Activated naive CD4-positive, alpha-beta T cell treated with anti-CD3 and anti-CD28 coated beads for 36 hours (primary cell): ENCODE measurements at regions of chr5 and their contacts with region 1.

Region 1: DNA sequence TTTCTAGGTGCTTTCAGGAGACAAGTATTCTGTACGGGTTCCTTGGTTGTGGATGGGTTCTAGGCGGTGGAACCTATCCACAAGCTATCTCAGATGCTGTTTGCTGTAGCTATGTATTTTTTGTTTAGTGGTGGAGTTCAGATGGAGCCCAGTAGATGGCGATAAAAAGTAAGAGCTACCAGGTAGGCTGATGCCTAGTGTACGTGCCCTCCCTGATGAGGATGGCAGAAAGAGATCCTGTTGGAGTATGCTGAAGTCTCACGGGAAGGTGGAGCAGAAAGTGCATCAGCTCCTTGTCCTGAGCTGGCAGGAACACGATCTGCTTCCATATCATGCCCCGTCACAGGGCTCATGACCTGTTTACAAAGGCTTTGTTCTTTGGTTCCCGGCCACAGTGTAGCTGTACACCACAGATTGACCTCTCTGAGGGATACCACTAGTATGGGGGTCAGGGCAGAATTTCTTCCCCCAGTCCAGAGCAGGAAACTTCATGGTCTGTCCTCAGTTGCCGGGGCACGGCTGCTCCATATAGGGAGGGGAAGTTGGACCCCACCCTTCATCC is 12.6 kb upstream of the UGT3A2 start:
- DNase-seq: peak; percentile 47
- H3K4me3 Mint-ChIP-seq: no peak overlapping the region
- H3K27ac Mint-ChIP-seq: no peak overlapping the region
- H3K4me1 Mint-ChIP-seq: no peaks in the 10 kb centered on the region
- H3K27me3 Mint-ChIP-seq: peaks cover 11% of the 10 kb centered on the region

Region 2: DNA sequence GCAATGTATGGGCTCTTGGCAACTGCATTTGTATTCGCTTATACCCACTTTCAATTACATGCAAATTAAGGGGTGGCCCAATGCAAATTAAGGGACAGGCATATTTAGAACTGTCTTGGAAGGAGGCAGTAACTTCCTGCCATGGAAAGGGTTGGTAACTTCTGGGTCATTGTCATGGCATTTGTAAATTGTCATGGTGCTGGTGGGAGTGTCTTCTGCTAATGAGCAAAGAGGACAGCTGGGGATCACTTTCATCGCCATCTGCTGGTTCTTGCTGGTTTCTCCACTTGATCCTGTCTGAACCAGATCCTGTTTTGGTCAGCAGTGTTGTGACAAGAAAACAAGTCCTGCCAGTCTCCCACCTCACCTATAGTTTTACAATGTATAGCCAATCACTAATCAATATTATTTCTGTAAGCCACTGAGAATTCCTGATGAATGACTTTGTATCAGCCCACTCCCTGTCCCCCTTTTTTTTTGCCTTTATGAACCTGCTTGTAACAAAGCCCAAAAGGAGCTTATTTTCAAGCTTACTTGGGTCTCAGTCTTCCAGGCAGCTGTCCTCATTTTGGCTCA is 10.8 kb after region 1 on chr5:
- CTCF ChIA-PET with region 1: interaction called, 18 read pairs
- intact Hi-C with region 1: no loop called
- DNase-seq: peak; percentile 16
- H3K4me3 Mint-ChIP-seq: no peak overlapping the region
- H3K27ac Mint-ChIP-seq: no peak overlapping the region
- H3K4me1 Mint-ChIP-seq: no peaks in the 10 kb centered on the region
- H3K27me3 Mint-ChIP-seq: peaks cover 6% of the 10 kb centered on the region

Region 3: DNA sequence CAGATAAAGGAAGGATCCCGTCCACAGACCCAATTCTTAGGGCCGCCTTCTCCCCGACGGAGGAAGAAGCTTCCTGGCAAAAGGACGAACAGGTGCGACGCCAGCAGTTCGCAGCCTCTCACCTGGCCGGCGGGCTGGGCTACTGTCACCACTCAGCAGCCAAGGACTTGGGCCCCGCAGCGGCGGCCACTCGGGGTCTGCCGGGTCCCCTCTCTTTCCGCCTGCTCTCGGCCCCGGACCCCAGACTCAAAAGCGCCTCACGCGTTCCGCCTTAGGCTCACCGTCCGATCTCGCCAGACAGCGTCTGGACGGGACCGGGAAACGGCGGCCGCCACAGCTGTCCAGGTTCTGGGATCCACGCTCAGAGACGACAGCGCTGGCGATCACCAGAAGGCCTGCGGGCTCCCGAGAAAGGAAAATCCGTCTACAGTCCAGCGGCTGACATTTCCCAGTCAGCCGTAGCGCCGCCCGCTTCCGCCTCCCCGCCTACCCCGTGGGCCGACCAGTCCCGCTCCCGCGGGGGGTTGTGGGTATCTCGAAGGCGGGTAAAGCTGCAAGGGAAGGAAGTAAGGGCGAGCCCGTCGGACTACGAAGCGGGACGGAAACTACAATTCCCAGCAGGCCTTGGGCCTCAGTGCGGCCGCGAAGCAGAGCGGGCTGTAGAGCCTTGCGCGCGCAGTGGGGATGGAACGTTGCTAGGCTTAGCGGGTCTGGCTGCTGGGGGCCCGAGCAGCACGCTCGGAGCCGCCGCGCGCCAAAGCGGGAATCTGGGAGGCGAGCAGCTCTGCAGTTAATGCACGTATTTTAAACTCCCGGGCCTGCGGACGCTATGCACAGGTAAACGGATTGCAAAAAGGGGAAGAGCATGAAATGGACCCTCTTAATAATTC is 72.4 kb after region 1 on chr5 and contains the starts of genes LMBRD2 and SKP2:
- CTCF ChIA-PET with region 1: interaction called, 8 read pairs
- intact Hi-C with region 1: loop called (anchors 1 kb)
- DNase-seq: peak; percentile 98
- H3K4me3 Mint-ChIP-seq: peak within 1 kb of the TSS; percentile 96
- H3K27ac Mint-ChIP-seq: peak within 1 kb of the TSS; percentile 76
- H3K4me1 Mint-ChIP-seq: peaks cover 67% of the 10 kb centered on the region
- H3K27me3 Mint-ChIP-seq: no peaks in the 10 kb centered on the region
- total RNA-seq, gene LMBRD2: 7.6 to 8.0 TPM
- total RNA-seq, gene SKP2: 44.4 to 48.1 TPM

Region 4: DNA sequence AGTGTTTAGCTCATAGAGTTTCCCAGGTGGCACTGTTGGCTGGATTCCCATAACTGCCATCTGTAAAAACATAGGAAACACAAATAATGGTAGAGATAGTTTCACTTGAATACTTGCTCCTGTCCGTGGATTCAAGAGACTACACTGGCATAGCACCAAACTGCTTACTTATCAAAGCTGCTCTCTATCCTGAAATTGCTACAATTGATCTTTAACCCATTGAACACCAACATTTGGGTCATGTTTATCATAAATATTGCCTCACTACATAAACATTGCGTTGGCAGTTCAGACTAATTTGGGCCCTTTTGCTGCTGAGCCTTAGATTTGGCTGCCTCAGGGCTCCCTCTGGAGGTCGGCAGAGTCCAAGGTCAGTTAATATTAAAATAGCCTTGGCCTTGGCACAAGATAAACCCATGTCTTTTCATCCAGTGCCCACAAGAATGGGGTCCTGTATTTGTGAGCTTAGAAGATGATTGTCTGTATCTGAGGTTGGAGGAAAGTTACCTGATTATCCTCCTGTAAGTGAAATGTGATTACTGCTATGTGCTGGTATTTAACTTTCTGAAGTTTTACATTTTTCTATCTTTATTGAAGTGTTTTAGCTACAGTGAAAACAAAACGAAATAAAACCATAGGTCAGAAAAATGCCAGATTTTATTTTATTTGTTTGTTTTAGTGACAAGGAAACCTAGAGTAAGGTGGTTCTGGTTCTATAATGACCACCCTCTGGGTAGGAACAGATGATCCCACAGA is 226.5 kb after region 1 on chr5:
- CTCF ChIA-PET with region 1: interaction called, 8 read pairs
- intact Hi-C with region 1: loop called (anchors 1 kb)
- DNase-seq: peak; percentile 51
- H3K4me3 Mint-ChIP-seq: no peak overlapping the region
- H3K27ac Mint-ChIP-seq: no peak overlapping the region
- H3K4me1 Mint-ChIP-seq: peaks cover 13% of the 10 kb centered on the region
- H3K27me3 Mint-ChIP-seq: peaks cover 2% of the 10 kb centered on the region

Region 5: DNA sequence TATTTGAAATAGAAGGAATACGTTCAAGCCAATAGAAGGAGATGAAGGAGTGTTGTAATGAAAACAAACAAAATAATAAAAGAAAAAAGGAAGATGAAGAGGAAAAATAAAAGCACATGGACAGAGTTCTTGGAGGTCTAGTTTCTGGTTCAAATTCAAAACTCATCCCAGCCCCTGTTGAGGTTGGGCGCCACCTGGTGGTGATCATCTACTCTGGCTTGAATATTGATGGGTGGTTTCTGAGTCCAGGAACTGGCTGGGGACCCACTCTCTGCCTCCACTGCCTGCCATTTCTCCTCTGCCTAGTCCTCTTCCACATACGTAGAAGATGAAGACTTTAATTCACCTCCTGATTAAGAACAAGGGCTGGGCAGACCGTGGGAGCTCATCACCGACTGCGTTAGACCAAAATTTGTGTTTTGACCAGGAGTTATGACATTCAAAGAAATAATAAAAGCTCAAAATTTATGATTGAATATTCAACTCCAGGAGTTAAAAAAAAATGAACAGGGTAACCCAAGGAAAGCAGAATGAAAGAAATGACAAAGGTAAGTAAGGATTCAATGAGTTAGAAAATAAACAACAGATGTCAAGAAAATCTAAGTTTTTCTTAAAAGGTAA is 428.2 kb after region 1 on chr5:
- CTCF ChIA-PET with region 1: interaction called, 20 read pairs
- intact Hi-C with region 1: loop called (anchors 1 kb)
- DNase-seq: peak; percentile 87
- H3K4me3 Mint-ChIP-seq: no peak overlapping the region
- H3K27ac Mint-ChIP-seq: no peak overlapping the region
- H3K4me1 Mint-ChIP-seq: no peaks in the 10 kb centered on the region
- H3K27me3 Mint-ChIP-seq: peaks cover 5% of the 10 kb centered on the region

Region 6: GRCh38 chr5:36690041-36690961 is 611.0 kb after region 1 on chr5:
- CTCF ChIA-PET with region 1: interaction called, 8 read pairs
- intact Hi-C with region 1: loop called (anchors 5 kb)
- DNase-seq: peak; percentile 79
- H3K4me3 Mint-ChIP-seq: peak overlapping the region; percentile 81
- H3K27ac Mint-ChIP-seq: no peak overlapping the region
- H3K4me1 Mint-ChIP-seq: peaks cover 12% of the 10 kb centered on the region
- H3K27me3 Mint-ChIP-seq: peaks cover 37% of the 10 kb centered on the region